Activated B cell treated with CpG ODN at 0.5 μM for 24 hours (primary cell): ENCODE measurements at regions of chr7 and their contacts with region 1.

Region 1: DNA sequence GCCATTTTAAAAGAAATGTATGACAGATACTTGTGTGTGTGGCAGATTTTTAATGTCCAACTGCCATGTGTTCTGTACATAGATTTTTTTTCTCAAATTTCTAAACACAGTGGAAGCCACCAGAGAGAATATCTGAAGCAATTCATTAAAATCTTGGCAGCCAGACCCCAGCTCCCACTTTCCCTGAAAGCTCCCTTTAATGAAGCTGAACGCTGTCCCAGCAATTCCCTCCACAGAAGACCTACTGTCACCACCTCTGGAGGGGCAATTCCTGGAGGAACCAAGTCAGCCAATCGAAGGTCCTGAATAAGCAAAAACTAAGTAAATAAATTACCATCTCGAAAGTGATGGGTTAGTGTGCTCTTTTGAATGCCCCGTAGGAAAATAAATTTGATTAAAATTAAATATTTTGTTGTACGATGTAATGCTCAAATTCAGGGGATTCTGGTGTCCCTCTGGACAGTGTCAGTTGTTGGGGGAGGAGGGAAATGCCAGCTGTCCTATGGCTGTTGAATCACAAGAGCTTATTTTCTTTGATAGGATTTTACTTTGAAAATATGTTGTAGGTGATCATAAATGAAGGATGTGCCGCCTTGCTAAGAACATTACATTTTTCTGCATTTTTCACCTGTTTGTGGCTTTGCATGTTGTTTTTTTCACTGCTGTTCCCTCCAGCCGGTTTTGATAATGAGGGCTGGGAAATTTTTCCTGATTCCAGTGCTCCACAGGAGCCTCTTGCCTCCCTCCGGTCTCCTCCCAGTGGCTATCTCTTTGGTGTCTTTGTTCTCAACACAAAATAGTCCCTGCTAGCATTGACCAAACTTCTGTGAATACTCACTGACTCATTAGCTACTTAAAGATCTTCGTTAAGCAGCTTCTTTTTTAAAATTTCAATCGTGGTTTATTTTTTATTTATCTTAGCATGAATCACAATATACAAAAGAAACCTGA is 9.2 kb upstream of the GSAP start:
- DNase-seq: no peak
- ATAC-seq: no peak
- H3K4me3 Mint-ChIP-seq: peak overlapping the region; percentile 59
- H3K27ac Mint-ChIP-seq: peak overlapping the region; percentile 46
- H3K4me1 Mint-ChIP-seq: peaks cover 39% of the 10 kb centered on the region
- H3K27me3 Mint-ChIP-seq: no peaks in the 10 kb centered on the region
- CTCF ChIP-seq: no peak

Region 2: DNA sequence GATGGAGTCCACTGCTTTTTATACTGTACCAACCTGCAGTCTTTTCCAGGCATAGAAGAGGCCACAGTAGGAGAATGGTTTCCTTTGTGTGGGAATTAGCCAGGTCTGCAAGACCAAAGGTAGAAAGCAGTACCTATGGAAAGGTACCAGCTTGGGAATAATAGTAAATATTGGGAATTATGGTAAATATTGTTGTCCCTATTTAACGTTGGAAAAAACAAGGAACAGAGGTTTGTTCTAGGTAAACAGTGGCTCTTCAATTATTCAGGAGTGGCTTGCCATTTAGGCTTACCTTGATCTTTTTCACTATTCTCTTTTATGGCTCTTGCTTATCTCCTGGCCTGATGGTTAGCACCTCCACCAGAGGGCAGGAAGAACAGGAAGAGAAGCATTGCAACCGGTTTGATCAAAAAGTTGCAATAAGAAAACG is 34.7 kb after region 1 on chr7:
- CTCF ChIA-PET with region 1: no interaction called
- POLR2A ChIA-PET with region 1: no interaction called
- intact Hi-C with region 1: loop called (anchors 5 kb)
- DNase-seq: no peak
- ATAC-seq: no peak
- H3K4me3 Mint-ChIP-seq: no peak overlapping the region
- H3K27ac Mint-ChIP-seq: no peak overlapping the region
- H3K4me1 Mint-ChIP-seq: peaks cover 17% of the 10 kb centered on the region
- H3K27me3 Mint-ChIP-seq: no peaks in the 10 kb centered on the region
- CTCF ChIP-seq: no peak